ENCODE measurements at regions of chr5 and their contacts with region 1.

Region 1: GRCh38 chr5:110757118-110757729 is 18.4 kb downstream of the SLC25A46 start:
- DNase-seq: no peak
- H3K4me3 ChIP-seq: no peak overlapping the region
- H3K27ac ChIP-seq: no peak overlapping the region
- H3K4me1 ChIP-seq: no peaks in the 10 kb centered on the region
- H3K27me3 ChIP-seq: no peaks in the 10 kb centered on the region
- CTCF ChIP-seq: peak; percentile 81
- EP300 ChIP-seq: no peak
- RAD21 ChIP-seq: peak; percentile 81

Region 2: DNA sequence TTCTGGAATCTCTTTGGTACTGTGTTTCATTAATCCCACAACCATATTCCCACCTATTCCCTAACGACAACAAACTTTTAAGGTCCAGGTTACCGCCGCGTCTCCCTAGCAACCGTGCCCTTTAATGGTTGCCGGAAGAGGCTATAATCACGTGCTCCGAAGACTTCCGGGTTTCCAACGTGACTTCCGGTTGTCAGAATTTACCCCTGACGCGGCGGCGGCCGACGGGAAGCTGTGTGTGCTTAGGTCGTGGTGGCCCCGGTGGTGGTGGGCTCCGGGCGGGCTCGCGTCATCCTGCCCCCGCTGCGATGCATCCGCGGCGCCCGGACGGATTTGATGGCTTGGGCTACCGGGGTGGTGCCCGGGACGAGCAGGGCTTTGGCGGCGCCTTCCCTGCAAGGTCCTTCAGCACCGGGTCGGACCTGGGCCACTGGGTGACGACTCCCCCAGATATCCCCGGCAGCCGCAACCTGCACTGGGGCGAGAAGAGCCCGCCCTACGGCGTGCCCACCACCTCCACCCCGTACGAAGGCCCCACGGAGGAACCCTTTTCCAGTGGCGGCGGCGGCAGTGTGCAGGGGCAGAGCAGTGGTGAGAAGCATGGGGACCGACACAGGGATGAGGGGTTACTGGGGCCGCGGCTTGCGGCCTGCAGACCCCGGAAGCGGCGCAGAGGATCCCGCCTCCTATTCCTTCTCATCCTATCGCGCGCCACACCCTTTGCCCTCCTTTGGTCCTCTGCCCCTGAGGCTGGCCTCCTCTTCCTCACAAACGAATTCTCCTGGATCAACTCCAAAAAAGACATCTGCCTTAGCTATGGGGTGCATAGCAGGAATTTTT is 18.2 kb before region 1 on chr5 and contains the start of gene SLC25A46:
- CTCF ChIA-PET with region 1: interaction called, 22 read pairs
- POLR2A ChIA-PET with region 1: no interaction called
- DNase-seq: peak; percentile 85
- H3K4me3 ChIP-seq: peak within 1 kb of the TSS; percentile 57 to 74
- H3K27ac ChIP-seq: peak within 1 kb of the TSS; percentile 77 to 85
- H3K4me1 ChIP-seq: no peaks in the 10 kb centered on the region; a peak in 1 of 4 replicates
- H3K27me3 ChIP-seq: no peaks in the 10 kb centered on the region
- CTCF ChIP-seq: no peak
- EP300 ChIP-seq: no peak
- RAD21 ChIP-seq: no peak
- polyA plus RNA-seq, gene SLC25A46: 15.7 and 20.5 TPM in 2 replicates

Region 3: GRCh38 chr5:110768138-110768860 is 11.1 kb after region 1 on chr5:
- CTCF ChIA-PET with region 1: interaction called, 15 read pairs
- POLR2A ChIA-PET with region 1: no interaction called
- DNase-seq: no peak
- H3K4me3 ChIP-seq: no peak overlapping the region
- H3K27ac ChIP-seq: peak overlapping the region; percentile 27 to 72; a peak in 3 of 4 replicates
- H3K4me1 ChIP-seq: peaks cover 0 to 14% of the 10 kb centered on the region in 2 experiments; a peak in 1 of 4 replicates
- H3K27me3 ChIP-seq: no peaks in the 10 kb centered on the region
- CTCF ChIP-seq: no peak
- EP300 ChIP-seq: no peak
- RAD21 ChIP-seq: no peak